ENCODE measurements at regions of chr2 and their contacts with region 1.

Region 1: GRCh38 chr2:112692496-112692911 is 28.3 kb upstream of the NT5DC4 start:
- DNase-seq: peak; percentile 83
- ATAC-seq: peak; percentile 91
- H3K4me3 Mint-ChIP-seq: no peak overlapping the region
- H3K27ac Mint-ChIP-seq: peak overlapping the region; percentile 59
- H3K4me1 Mint-ChIP-seq: peaks cover 29% of the 10 kb centered on the region
- H3K27me3 Mint-ChIP-seq: no peaks in the 10 kb centered on the region
- CTCF ChIP-seq: no peak

Region 2: GRCh38 chr2:112597537-112598322 is 94.8 kb before region 1 on chr2:
- CTCF ChIA-PET with region 1: interaction called, 29 read pairs
- POLR2A ChIA-PET with region 1: no interaction called
- intact Hi-C with region 1: no loop called
- DNase-seq: no peak
- ATAC-seq: no peak
- H3K4me3 Mint-ChIP-seq: no peak overlapping the region
- H3K27ac Mint-ChIP-seq: no peak overlapping the region
- H3K4me1 Mint-ChIP-seq: peaks cover 5% of the 10 kb centered on the region
- H3K27me3 Mint-ChIP-seq: no peaks in the 10 kb centered on the region
- CTCF ChIP-seq: no peak

Region 3: GRCh38 chr2:112706170-112706664 is 13.7 kb after region 1 on chr2:
- CTCF ChIA-PET with region 1: interaction called, 10 read pairs
- POLR2A ChIA-PET with region 1: no interaction called
- intact Hi-C with region 1: no loop called
- DNase-seq: peak; percentile 89
- ATAC-seq: peak; percentile 96
- H3K4me3 Mint-ChIP-seq: no peak overlapping the region
- H3K27ac Mint-ChIP-seq: no peak overlapping the region
- H3K4me1 Mint-ChIP-seq: peaks cover 28% of the 10 kb centered on the region
- H3K27me3 Mint-ChIP-seq: peaks cover 20% of the 10 kb centered on the region
- CTCF ChIP-seq: no peak

Region 4: GRCh38 chr2:112794131-112794733 is 101.7 kb after region 1 on chr2:
- CTCF ChIA-PET with region 1: no interaction called
- POLR2A ChIA-PET with region 1: no interaction called
- intact Hi-C with region 1: no loop called
- DNase-seq: peak; percentile 60
- ATAC-seq: peak; percentile 86
- H3K4me3 Mint-ChIP-seq: no peak overlapping the region
- H3K27ac Mint-ChIP-seq: peak overlapping the region; percentile 16
- H3K4me1 Mint-ChIP-seq: peaks cover 14% of the 10 kb centered on the region
- H3K27me3 Mint-ChIP-seq: no peaks in the 10 kb centered on the region
- CTCF ChIP-seq: no peak

Region 5: GRCh38 chr2:113012436-113013335 is 320.2 kb after region 1 on chr2:
- CTCF ChIA-PET with region 1: no interaction called
- POLR2A ChIA-PET with region 1: no interaction called
- intact Hi-C with region 1: no loop called
- DNase-seq: no peak
- ATAC-seq: no peak
- H3K4me3 Mint-ChIP-seq: no peak overlapping the region
- H3K27ac Mint-ChIP-seq: no peak overlapping the region
- H3K4me1 Mint-ChIP-seq: peaks cover 21% of the 10 kb centered on the region
- H3K27me3 Mint-ChIP-seq: no peaks in the 10 kb centered on the region
- CTCF ChIP-seq: no peak